Activated CD4-positive, alpha-beta memory T cell treated with anti-CD3 and anti-CD28 coated beads for 36 hours (primary cell): ENCODE measurements at regions of chr1 and their contacts with region 1.

Region 1: DNA sequence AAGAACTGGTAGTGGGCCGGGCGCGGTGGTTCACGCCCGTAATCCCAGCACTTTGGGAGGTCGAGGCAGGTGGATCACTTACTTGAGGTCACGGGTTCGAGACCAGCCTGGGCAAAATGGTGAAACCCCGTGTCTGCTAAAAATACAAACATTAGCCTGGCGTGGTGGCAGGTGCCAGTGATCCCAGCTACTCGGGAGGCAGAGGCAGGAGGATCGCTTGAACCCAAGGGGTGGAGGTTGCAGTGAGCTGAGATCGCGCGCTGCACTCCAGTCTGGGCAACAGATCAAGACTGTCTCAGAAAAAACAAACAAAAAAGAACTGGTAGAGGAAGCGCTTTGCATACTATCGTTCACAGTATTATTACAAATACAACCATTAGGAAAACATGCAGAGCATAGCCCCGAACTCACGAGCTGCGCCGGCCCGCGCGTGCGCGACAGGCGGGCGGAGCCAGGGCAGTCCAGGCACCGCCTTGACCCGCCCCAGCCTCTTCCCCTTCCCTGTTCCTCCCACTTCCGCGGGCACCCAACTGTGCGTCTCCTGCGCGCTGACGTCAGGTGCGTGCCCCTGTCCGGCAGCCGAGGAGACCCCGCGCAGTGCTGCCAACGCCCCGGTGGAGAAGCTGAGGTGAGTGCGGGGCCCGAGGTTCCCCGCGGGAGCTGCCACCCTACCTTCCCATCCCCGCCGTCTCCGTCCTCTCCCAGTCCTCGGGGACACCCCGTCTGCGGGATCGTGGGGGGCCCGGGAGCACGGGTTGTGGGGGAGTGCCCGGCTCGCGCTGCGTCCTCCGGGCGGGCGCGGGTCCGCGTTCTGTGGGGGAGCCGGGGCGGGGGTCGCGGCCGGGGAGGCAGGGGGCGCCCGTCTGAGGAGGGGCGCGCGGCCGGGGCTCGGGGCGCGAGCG is at the start of gene CDC42:
- DNase-seq: peak; percentile 98
- H3K4me3 Mint-ChIP-seq: peak within 1 kb of the TSS; percentile 98
- H3K27ac Mint-ChIP-seq: peak within 1 kb of the TSS; percentile 99
- H3K4me1 Mint-ChIP-seq: peaks cover 53% of the 10 kb centered on the region
- H3K27me3 Mint-ChIP-seq: no peaks in the 10 kb centered on the region
- total RNA-seq, gene CDC42: 310 to 314 TPM

Region 2: DNA sequence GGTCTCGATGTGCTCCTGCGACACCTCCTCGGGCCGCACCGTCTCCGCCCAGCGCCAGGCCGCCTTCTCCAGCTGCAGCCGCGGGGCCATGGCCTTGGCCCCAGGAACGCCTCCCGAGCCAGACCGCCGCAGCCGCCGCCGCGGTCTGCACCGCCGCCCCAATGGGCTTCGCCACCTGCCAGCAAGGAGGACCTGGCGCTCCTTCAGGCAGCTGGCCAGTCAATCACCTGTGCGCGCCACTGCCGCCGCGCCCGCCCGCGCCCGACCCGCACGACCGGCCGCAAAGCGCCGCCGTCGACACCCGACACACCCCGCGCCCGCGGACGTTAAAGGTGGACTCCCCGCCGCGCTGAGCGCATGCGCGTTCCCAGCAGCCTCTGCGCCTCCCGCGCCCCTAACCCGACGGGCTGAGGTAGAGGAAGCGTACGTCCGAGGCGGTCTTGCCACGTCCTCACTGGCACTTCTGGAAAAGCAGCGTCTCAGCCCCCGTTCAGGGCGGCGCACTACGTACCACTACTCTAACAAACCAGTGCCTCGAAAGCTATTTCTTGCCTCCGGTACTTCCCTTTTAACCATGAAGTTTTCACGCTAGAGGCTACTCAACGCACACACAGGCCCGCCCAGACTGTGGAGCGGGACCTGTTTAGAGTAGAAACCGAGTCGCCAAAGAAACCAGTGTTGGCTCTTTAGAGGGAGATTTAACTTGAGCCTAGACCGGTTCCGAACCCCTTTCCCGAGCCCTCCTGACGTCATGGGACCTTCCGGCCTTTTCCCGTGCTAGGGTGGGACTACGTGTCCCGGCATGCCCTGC is 269.3 kb before region 1 on chr1 and contains the start of gene USP48:
- CTCF ChIA-PET with region 1: no interaction called
- POLR2A ChIA-PET with region 1: interaction called, 18 read pairs
- intact Hi-C with region 1: no loop called
- DNase-seq: peak; percentile 98
- H3K4me3 Mint-ChIP-seq: peak within 1 kb of the TSS; percentile 94
- H3K27ac Mint-ChIP-seq: peak within 1 kb of the TSS; percentile 97
- H3K4me1 Mint-ChIP-seq: peaks cover 21% of the 10 kb centered on the region
- H3K27me3 Mint-ChIP-seq: no peaks in the 10 kb centered on the region
- total RNA-seq, gene USP48: 77.2 to 91.1 TPM

Region 3: GRCh38 chr1:22025368-22026155 is 26.8 kb before region 1 on chr1:
- CTCF ChIA-PET with region 1: interaction called, 62 read pairs
- POLR2A ChIA-PET with region 1: interaction called, 78 read pairs
- intact Hi-C with region 1: loop called (anchors 1 kb)
- DNase-seq: peak; percentile 92
- H3K4me3 Mint-ChIP-seq: peak overlapping the region; percentile 95
- H3K27ac Mint-ChIP-seq: peak overlapping the region; percentile 99
- H3K4me1 Mint-ChIP-seq: peaks cover 43% of the 10 kb centered on the region
- H3K27me3 Mint-ChIP-seq: no peaks in the 10 kb centered on the region

Region 4: GRCh38 chr1:22075718-22076117 is 23.4 kb after region 1 on chr1:
- CTCF ChIA-PET with region 1: interaction called, 6 read pairs
- POLR2A ChIA-PET with region 1: interaction called, 4 read pairs
- intact Hi-C with region 1: loop called (anchors 2 kb)
- DNase-seq: no peak
- H3K4me3 Mint-ChIP-seq: no peak overlapping the region
- H3K27ac Mint-ChIP-seq: peak overlapping the region; percentile 31
- H3K4me1 Mint-ChIP-seq: peaks cover 84% of the 10 kb centered on the region
- H3K27me3 Mint-ChIP-seq: no peaks in the 10 kb centered on the region

Region 5: GRCh38 chr1:22105611-22106207 is 53.3 kb after region 1 on chr1:
- CTCF ChIA-PET with region 1: interaction called, 3 read pairs
- POLR2A ChIA-PET with region 1: interaction called, 11 read pairs
- intact Hi-C with region 1: loop called (anchors 2 kb)
- DNase-seq: peak; percentile 29
- H3K4me3 Mint-ChIP-seq: no peak overlapping the region
- H3K27ac Mint-ChIP-seq: peak overlapping the region; percentile 72
- H3K4me1 Mint-ChIP-seq: peaks cover 50% of the 10 kb centered on the region
- H3K27me3 Mint-ChIP-seq: no peaks in the 10 kb centered on the region